ENCODE measurements at regions of chr4 and their contacts with region 1.

Region 1: DNA sequence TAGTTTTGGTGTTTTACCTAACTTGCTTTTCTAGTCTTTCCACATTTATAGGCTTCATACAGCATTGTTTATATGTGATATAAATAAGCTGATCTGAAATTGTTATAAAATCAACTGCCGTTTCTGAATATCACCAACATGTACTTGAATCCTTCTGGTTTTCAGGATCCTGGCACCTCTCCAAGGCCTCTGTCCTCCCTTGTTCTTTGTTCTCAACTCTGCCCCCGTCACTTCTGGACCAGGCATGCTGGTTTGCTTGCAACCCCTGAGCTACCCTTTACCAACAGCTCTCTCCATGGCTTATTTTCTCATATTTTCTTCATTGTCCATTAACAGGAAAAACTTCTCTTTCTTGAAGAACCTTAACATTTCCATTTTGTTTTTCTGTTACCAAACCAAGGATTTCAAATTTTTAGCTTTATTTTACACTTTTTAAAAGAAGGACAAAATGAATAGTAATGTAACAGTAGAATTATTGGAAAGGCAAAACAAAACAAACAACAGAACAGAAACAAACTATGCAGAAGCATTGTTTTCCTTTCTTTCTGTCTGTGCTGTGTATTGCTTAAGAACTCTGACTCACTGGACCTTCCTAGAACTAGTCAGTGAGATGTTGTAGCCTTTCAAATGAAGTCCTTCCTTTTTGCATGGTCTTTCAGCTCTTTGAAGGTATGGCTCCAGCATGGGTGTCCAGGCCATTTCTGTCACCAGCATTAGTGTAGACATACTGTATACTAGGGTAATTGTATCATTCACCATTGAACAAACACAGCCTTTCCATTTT is 44.8 kb downstream of the BANK1 start:
- DNase-seq: no peak
- ATAC-seq: no peak
- H3K4me3 ChIP-seq: no peak overlapping the region
- H3K4me3 Mint-ChIP-seq: peak overlapping the region; percentile 20
- H3K27ac ChIP-seq: peak overlapping the region in 1 of 2 donors; percentile 62
- H3K27ac Mint-ChIP-seq: peak overlapping the region; percentile 86
- H3K4me1 ChIP-seq: peaks cover 35 to 69% of the 10 kb centered on the region in 2 donors
- H3K4me1 Mint-ChIP-seq: peaks cover 79% of the 10 kb centered on the region
- H3K27me3 ChIP-seq: no peaks in the 10 kb centered on the region
- H3K27me3 Mint-ChIP-seq: no peaks in the 10 kb centered on the region
- CTCF ChIP-seq: no peak

Region 2: GRCh38 chr4:101823864-101824263 is 11.4 kb before region 1 on chr4:
- CTCF ChIA-PET with region 1: interaction called, 3 read pairs
- POLR2A ChIA-PET with region 1: no interaction called
- intact Hi-C with region 1: loop called (anchors 1 kb)
- DNase-seq: no peak
- ATAC-seq: peak; percentile 52
- H3K4me3 ChIP-seq: peak overlapping the region in 2 of 5 experiments; percentile 3 to 41
- H3K4me3 Mint-ChIP-seq: peak overlapping the region; percentile 53
- H3K27ac ChIP-seq: peak overlapping the region in 1 of 2 donors; percentile 71
- H3K27ac Mint-ChIP-seq: peak overlapping the region; percentile 87
- H3K4me1 ChIP-seq: peaks cover 45 to 67% of the 10 kb centered on the region in 2 donors
- H3K4me1 Mint-ChIP-seq: peaks cover 71% of the 10 kb centered on the region
- H3K27me3 ChIP-seq: no peaks in the 10 kb centered on the region
- H3K27me3 Mint-ChIP-seq: no peaks in the 10 kb centered on the region
- CTCF ChIP-seq: no peak

Region 3: DNA sequence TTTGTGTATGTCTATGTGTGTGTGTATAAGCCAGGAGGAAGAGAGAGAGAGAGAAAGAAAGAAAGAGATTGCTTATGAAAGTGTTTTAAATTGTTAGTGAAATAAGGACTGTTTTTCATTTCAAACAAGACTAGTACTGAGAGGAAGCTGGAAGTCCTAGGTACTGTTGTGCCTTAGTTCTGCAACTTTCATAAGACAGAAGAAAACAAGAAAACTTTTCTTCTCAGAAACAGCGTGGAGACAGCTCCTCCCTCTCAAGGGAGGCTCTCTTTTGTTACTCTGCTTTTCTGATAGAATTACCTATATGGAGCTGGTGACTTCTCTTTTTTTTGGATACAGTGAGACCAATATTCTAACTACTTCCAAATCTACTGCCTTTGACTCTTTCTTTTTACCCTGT is 17.7 kb after region 1 on chr4:
- CTCF ChIA-PET with region 1: interaction called, 4 read pairs
- POLR2A ChIA-PET with region 1: no interaction called
- intact Hi-C with region 1: loop called (anchors 2 kb)
- DNase-seq: peak; percentile 50
- ATAC-seq: peak; percentile 58
- H3K4me3 ChIP-seq: peak overlapping the region in 2 of 5 experiments; percentile 3 to 33
- H3K4me3 Mint-ChIP-seq: peak overlapping the region; percentile 73
- H3K27ac ChIP-seq: peak overlapping the region; percentile 58 to 84
- H3K27ac Mint-ChIP-seq: peak overlapping the region; percentile 92
- H3K4me1 ChIP-seq: peaks cover 68 to 91% of the 10 kb centered on the region in 2 donors
- H3K4me1 Mint-ChIP-seq: peaks cover 77% of the 10 kb centered on the region
- H3K27me3 ChIP-seq: no peaks in the 10 kb centered on the region
- H3K27me3 Mint-ChIP-seq: no peaks in the 10 kb centered on the region
- CTCF ChIP-seq: no peak

Region 4: DNA sequence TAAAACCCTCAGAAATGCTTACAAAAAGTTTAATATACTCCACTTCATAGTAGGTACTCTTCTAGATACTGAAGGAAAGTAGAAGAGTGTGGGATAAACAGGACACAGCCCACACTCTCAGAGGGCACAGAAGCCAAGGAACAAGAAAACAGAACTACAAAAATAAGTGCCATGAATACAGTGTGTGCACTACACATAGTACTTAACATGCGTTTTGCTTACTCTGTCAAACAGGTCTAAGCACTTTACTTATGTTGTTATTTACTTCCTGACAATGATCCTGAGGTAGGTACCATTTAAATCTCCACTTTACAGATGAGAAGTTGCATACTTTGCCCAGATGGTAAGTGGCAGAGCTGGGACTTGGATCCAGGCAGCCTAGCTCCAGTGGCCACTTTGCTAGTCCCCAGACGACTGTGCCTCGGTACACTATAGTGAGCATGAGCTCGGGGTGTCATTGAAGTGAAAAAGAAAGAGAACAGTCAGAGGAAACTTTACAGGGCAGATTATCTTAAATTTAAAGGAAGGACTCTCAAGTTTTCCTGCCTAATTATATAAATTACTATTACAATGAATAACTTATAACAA is 75.6 kb after region 1 on chr4:
- CTCF ChIA-PET with region 1: no interaction called
- POLR2A ChIA-PET with region 1: interaction called, 10 read pairs
- intact Hi-C with region 1: no loop called
- DNase-seq: no peak
- ATAC-seq: no peak
- H3K4me3 ChIP-seq: no peak overlapping the region
- H3K4me3 Mint-ChIP-seq: no peak overlapping the region
- H3K27ac ChIP-seq: peak overlapping the region in 1 of 2 donors; percentile 17
- H3K27ac Mint-ChIP-seq: peak overlapping the region; percentile 79
- H3K4me1 ChIP-seq: no peaks in the 10 kb centered on the region
- H3K4me1 Mint-ChIP-seq: peaks cover 20% of the 10 kb centered on the region
- H3K27me3 ChIP-seq: no peaks in the 10 kb centered on the region
- H3K27me3 Mint-ChIP-seq: no peaks in the 10 kb centered on the region
- CTCF ChIP-seq: no peak

Region 5: GRCh38 chr4:103289186-103289585 is 1453.9 kb after region 1 on chr4:
- CTCF ChIA-PET with region 1: no interaction called
- POLR2A ChIA-PET with region 1: no interaction called
- intact Hi-C with region 1: no loop called
- DNase-seq: no peak
- ATAC-seq: no peak
- H3K4me3 ChIP-seq: no peak overlapping the region
- H3K4me3 Mint-ChIP-seq: no peak overlapping the region
- H3K27ac ChIP-seq: no peak overlapping the region
- H3K27ac Mint-ChIP-seq: no peak overlapping the region
- H3K4me1 ChIP-seq: no peaks in the 10 kb centered on the region
- H3K4me1 Mint-ChIP-seq: no peaks in the 10 kb centered on the region
- H3K27me3 ChIP-seq: no peaks in the 10 kb centered on the region
- H3K27me3 Mint-ChIP-seq: no peaks in the 10 kb centered on the region
- CTCF ChIP-seq: no peak

Measured in B cell (primary cell).